ENCODE measurements at regions of chr10 and their contacts with region 1.

Region 1: GRCh38 chr10:110304780-110305421 is at the start of gene SMNDC1:
- DNase-seq: peak; percentile 99
- H3K4me3 ChIP-seq: peak within 1 kb of the TSS; percentile 60 to 95
- H3K27ac ChIP-seq: peak within 1 kb of the TSS; percentile 88 to 89
- H3K4me1 ChIP-seq: peaks cover 6% of the 10 kb centered on the region
- H3K27me3 ChIP-seq: no peaks in the 10 kb centered on the region
- CTCF ChIP-seq: no peak
- POLR2A ChIP-seq: peak; percentile 73
- total RNA-seq, gene SMNDC1: 8.0 to 11.0 TPM

Region 2: DNA sequence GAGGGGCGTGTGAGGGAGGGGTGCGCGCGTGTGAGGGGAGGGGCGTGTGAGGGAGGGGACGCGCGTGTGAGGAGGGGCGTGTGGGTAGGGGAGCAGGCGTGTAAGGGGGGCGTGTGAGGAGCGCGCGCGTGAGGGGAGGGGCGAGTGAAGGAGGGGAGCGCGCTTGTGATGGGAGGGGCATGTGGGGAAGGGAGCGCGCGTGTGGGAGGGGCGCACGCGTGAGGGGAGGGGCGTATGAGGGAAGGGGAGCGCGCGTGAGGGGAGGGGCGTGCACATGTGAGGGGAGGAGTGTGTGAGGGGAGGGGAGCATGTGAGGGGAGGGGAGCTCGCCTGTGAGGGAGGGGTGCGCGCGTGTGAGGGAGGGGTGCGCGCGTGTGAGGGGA is 78.4 kb before region 1 on chr10:
- intact Hi-C with region 1: no loop called
- DNase-seq: peak; percentile 94
- H3K4me3 ChIP-seq: peak overlapping the region; percentile 78 to 89
- H3K27ac ChIP-seq: peak overlapping the region; percentile 96
- H3K4me1 ChIP-seq: no peaks in the 10 kb centered on the region
- H3K27me3 ChIP-seq: no peaks in the 10 kb centered on the region
- CTCF ChIP-seq: no peak
- POLR2A ChIP-seq: no peak

Region 3: DNA sequence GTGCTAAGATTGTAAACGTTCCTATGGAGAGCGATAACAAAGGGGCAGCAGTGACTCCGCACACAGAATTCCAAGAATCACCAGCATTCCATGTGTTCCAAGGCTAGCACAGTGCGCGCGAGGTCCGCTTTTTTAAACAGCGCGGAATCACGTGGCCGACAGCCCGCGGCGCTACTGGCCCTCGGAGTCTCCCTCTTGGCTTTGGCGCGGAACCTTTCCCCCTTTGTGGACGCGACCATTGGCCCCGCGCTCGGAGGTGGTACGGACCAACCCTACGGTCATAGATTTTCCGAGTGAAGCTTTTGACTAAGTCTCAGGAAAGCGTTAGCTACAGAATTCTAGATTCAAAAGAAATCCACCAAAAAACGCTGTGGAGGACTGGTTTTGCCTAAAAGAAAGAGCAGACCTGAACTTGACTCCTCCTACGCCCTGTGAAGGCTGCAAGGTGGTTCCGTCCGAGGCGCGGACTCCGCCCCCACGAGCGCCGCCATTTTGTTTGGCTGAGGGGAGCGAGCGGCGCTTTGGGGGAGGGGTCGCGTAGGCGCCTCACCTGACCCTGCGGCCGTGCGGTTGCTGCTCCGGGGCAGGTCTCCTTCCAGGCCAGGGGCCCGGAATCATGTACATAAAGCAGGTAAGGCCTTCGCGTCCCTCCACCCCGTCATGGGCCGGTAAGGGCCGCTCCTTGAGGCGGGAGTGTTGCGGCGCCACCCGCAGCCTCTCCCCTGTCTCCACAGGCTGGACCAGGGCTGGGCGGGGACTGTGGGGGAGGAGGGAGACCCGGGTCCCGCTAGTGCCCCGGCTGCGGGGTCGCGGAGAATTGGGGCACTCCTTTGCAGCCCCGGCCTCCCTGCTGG is 262.5 kb after region 1 on chr10 and contains the start of gene SMC3:
- intact Hi-C with region 1: loop called (anchors 5 kb)
- DNase-seq: peak; percentile 83
- H3K4me3 ChIP-seq: peak within 1 kb of the TSS; percentile 67 to 94
- H3K27ac ChIP-seq: peak within 1 kb of the TSS; percentile 76 to 88
- H3K4me1 ChIP-seq: no peaks in the 10 kb centered on the region
- H3K27me3 ChIP-seq: no peaks in the 10 kb centered on the region
- CTCF ChIP-seq: no peak
- POLR2A ChIP-seq: peak; percentile 30
- total RNA-seq, gene SMC3: 25.6 to 38.8 TPM

Region 4: GRCh38 chr10:110918643-110919363 is 613.9 kb after region 1 on chr10 and contains the start of gene BBIP1:
- intact Hi-C with region 1: loop called (anchors 10 kb)
- DNase-seq: no peak
- H3K4me3 ChIP-seq: peak within 1 kb of the TSS; percentile 76 to 80
- H3K27ac ChIP-seq: peak within 1 kb of the TSS; percentile 97 to 99
- H3K4me1 ChIP-seq: peaks cover 6% of the 10 kb centered on the region
- H3K27me3 ChIP-seq: no peaks in the 10 kb centered on the region
- CTCF ChIP-seq: peak in 1 of 4 experiments; percentile 51
- POLR2A ChIP-seq: peak; percentile 48
- total RNA-seq, gene BBIP1: 18.8 to 20.9 TPM

Measured in prostate gland (tissue), 2 donors.